Right ventricle myocardium inferior (tissue), 1 donor: ENCODE measurements at regions of chr20 and their contacts with region 1.

Region 1: GRCh38 chr20:24100385-24101011 is 111.9 kb upstream of the GGTLC1 start:
- DNase-seq: no peak
- ATAC-seq: peak; percentile 87

Region 2: DNA sequence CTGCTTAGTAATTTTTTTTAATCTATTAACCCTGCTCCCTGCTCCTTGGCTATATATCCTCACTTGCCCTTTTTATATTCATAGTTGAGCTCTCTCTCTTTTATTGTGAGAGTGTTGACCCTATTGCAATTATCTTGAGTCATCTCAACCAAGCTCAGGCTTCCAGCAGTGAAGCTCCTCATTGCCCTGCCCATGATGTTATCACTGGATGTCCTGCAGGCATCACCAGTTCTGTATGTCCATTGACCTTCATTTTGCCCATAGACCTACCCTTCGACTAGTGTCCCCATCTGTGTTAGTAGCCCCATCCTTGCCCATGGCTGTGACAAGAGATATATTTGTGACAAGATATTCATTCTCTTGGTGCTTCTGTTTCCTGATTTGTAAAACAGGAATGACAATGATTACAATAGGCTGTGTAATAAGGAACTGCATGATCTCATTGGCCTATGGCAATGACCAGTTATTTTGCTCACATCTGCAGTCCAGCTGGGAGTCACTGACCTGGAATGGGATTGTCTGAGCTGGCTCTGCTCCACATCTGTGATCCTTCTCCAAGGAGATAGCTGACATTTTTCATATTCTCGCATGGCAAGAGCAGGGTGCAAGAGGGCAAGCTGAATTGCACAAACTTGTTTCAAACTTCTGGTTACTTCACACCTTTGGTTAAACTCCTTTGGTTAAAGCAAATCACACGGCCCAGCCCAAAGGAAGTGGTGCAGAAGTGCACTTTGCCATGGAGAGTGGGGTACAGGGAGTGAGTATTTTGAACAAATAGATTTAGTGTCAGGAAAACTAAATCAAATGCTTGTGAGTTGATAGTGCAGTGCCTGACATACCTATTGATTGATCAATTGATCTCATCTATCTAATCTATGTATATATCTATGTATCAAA is 173.3 kb before region 1 on chr20:
- intact Hi-C with region 1: no loop called
- DNase-seq: no peak
- ATAC-seq: no peak

Region 3: DNA sequence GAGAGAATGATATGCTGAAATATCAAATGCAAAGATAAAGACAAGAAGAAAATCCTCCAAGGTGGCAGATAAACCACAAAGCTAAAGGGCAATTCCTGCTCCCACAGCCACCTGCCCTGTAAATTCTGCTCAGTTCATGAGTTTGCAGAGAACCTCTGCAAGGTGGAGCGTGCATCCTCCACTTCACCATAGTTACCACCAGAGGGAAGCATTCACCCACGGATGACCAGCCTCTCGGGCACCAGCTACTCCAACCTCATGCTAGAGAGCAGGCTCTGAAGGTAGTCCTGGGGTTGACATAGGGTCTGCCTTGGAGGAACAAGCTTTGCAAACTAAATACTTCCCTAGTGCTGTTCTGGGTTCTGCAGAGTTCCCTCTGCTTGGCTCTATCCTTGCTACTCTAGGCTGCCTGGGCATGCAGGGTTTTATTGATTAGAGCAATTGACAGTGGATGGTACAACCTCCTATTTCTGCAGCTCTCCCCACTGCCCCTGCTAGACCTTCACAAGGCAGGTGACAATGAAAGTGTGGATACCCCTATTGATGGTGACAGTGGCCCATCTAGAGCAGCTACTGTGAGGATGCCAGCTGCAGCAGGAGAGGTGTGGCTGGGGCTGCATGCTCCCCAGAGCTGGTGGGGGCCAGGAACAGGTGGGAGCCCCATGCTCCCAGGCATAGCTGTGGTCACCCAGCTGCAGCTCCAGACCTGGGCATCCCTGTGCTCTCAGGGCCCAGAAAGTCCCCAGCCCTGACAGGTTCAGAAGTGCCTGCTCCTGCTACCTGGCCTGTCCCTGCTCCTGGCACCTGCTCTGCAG is 163.0 kb before region 1 on chr20:
- intact Hi-C with region 1: loop called (anchors 2 kb)
- DNase-seq: no peak
- ATAC-seq: peak; percentile 93